ENCODE measurements at regions of chr17 and their contacts with region 1.

Region 1: GRCh38 chr17:45218895-45219661 is 2.6 kb upstream of the FMNL1 start:
- DNase-seq: peak; percentile 37
- H3K4me3 ChIP-seq: peak overlapping the region; percentile 30
- CTCF ChIP-seq: peak; percentile 86

Region 2: GRCh38 chr17:45235416-45236281 is 16.6 kb after region 1 on chr17:
- CTCF ChIA-PET with region 1: interaction called, 205 read pairs
- POLR2A ChIA-PET with region 1: no interaction called
- DNase-seq: peak; percentile 9
- H3K4me3 ChIP-seq: no peak overlapping the region
- CTCF ChIP-seq: peak; percentile 87

Region 3: DNA sequence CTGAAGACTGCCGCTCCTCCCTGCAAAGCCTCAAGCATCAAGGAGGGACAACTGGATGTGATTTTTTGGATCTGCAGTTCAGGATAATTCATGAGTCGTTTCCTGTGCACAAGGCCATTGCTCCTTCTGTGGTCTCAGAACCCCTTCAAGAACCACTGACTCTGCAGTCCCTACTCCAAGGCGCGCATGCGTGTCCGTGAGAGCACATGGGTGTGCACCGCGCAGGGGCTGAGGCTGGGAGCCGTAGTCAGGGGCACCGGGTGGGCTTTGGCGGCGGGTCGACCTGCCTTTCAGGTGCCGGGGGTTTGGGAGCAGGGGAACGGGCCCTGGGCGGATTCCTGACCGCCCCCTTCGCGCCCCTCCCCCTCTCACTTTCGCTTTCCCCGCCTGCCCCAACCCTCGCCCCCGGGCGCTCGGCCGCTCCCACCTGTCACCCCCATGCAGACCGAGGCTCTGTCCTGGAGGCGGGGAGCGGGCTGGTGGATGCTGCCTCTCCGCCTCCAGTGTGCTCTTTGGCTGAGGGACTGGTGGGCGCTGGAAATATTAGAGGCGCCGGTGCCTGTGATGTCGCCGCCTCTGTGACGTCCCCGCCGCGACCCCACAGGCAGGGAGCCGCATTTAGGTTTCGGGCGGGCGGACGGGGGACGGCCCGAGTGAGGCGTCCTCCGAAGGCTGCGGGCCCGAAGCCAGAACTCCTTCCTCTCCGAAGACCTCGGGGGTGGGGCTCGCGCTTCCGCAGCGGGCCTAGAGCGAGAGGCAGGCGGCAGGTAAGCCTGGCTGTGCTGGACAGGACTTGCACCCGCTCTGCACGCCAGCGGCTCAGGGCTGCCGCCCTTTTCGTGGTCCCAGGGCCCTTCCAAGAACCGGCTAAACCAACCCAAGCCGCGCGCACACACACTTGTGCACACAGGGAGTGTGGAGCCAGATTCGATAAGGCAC is 42.8 kb after region 1 on chr17 and contains the start of gene SPATA32:
- CTCF ChIA-PET with region 1: interaction called, 22 read pairs
- POLR2A ChIA-PET with region 1: no interaction called
- DNase-seq: no peak
- H3K4me3 ChIP-seq: peak within 1 kb of the TSS; percentile 23
- CTCF ChIP-seq: no peak

Region 4: DNA sequence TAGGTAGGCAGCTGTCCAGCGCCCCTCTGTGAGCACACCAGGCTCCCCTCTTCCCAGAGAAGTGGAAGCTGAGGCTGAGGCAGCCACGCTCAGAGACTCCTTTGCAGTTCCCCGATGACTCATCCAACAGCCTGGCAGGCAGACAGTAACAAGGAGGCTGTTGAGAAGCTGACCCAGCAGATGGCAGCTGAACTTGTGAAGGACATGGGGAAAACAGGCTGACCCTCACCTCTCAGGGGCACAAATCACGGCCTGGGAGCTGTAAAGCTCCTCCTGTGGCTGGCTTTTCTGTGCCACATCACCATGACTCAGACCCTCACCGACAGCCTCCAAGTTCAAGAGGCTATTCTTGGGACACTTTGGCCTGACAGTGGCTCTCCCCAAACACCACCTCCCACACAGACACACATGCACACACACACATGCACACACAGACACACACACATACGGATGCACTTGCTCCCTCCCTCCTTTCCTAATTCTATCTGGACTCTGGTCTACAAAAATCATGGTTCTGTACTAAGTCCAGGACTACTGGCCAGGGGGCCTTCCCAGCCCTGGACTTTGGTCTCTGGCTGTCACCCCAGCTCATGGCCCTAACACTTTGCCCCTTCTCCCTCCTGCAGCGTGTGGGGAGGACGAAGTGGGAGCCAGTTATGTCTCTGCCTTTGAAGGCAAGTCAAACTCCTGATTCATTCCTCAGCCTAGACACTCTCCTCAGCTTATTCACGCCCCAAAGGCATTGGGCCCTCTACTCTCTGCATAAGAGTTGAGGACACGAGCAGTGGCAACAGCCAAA is 74.5 kb after region 1 on chr17:
- CTCF ChIA-PET with region 1: interaction called, 12 read pairs
- POLR2A ChIA-PET with region 1: no interaction called
- DNase-seq: no peak
- H3K4me3 ChIP-seq: no peak overlapping the region
- CTCF ChIP-seq: peak; percentile 30

Region 5: DNA sequence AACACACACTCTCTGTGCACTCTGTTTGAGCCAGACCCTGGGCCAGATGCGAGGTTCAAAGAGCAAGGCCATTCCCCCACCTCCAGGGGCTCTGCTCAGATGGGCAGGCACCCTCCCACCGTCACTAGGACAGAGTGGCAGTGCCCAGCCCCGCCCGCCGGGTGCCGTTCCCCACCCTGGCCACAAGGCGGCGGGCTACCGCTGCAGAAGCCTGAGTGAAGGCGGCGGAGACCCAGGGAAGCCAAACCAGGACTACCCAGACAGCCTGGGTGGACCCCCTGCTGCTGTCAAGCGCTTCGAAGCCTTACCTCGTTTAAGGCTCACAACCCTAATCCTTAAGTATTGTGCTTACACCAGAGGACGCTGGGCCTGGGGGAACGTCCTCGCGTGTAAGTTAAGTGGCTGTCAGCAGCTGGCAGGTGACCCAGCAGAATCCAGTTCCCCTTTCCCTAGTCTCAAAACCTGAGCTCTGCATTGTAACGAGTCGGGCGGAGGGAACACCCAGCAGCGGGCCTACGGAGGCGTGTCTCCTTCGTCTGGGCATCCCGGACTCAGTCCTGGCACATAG is 209.1 kb after region 1 on chr17:
- CTCF ChIA-PET with region 1: interaction called, 98 read pairs
- POLR2A ChIA-PET with region 1: no interaction called
- DNase-seq: no peak
- H3K4me3 ChIP-seq: no peak overlapping the region
- CTCF ChIP-seq: peak; percentile 99